Activated T-helper 2 cell treated with anti-CD3 and anti-CD28 coated beads, Interferon-gamma antibody, Interleukin-2, Interleukin-4, amounts not matched to agents 10 μg/mL and 5 μg/mL and 100 μg/mL, durations not matched to agents 14 hours and 24 hours and 36 hours (primary cell): ENCODE measurements at regions of chr17 and their contacts with region 1.

Region 1: DNA sequence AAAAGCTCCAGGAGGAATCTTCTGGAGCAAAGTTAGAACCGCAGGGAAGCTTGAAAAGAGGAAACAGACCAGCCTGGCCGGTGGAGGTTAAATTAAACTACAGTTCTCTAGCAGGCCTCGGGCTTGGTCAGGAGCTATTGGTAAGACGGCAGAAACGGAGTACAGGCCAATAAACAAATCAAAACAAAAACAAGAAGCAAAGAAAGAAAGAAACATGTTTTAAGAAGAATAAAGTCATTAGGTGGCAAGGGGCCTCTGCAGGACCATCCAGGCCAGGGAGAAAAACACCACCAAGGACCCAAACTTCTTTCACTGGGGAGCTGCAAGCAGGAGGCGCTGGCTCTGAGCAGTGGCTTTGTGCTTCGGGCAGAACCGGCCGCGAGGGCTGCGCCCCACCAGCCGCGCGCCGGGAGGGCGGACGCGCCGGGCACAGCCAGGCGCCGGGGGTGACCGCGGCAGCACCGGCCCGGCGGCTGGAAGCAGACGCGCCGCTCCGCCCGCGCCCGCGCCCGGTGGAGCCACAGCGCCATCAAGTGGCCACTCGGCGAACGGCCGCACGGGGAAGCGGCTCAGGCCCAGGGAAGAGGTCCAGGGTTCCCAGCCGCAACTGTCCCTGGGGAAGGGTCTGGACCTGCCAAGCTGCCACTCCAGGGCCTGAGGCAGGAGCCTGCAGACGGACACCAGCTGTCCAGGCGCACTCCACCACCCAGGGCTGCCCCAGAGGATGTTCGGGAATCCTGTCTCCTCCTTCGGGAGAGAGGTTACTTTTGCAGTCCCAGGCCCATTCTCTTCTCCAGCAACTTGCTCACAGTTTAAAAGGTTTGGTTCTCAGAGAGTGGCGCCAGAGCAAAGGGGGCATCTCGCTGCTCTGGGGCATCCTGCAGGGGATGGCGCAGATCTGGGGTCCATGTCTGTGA is 419.4 kb downstream of the SOX9 start:
- DNase-seq: peak; percentile 37
- H3K4me3 Mint-ChIP-seq: no peak overlapping the region
- H3K27ac Mint-ChIP-seq: peak overlapping the region; percentile 14
- H3K4me1 Mint-ChIP-seq: peaks cover 2% of the 10 kb centered on the region
- H3K27me3 Mint-ChIP-seq: peaks cover 9% of the 10 kb centered on the region

Region 2: GRCh38 chr17:70636517-70637133 is 1903.6 kb before region 1 on chr17:
- intact Hi-C with region 1: loop called (anchors 5 kb)
- DNase-seq: no peak
- H3K4me3 Mint-ChIP-seq: no peak overlapping the region
- H3K27ac Mint-ChIP-seq: no peak overlapping the region
- H3K4me1 Mint-ChIP-seq: no peaks in the 10 kb centered on the region
- H3K27me3 Mint-ChIP-seq: no peaks in the 10 kb centered on the region